ENCODE measurements at regions of chr19 and their contacts with region 1.

Region 1: DNA sequence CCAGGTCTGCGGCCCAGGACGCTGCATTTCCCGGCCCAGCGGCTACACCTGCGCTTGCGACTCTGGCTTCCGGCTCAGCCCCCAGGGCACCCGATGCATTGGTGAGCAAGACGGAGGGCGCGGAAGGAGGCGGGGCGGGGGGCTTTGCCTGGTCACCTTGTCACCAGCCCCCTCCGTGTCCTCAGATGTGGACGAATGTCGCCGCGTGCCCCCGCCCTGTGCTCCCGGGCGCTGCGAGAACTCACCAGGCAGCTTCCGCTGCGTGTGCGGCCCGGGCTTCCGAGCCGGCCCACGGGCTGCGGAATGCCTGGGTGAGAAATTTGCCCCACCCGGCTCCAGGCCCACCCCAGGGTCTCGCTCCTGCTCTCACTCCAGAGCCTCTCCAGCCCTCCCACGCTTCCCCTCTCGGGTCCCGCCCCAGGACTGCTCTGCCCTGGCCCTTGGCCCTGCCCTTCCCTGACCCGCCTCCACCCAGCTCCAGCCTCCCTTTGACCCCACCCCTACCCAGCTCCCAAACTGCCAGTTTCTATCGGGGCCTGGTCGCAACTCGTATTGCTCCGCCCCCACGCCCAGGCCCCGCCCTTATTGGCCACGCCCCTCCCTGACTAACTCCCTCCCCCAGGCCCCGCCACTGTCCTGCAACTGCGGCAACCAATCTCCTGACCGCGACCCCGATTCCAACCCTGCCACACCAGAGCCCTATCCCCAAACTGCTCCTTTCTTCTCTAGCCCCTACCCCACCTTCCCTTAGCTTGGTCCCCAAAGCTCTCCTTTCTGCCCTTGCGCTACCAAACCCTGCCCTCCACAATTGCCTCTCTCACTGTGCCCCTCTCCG is 8.6 kb downstream of the LTBP4 start:
- DNase-seq: peak; percentile 97
- H3K4me3 Mint-ChIP-seq: peak overlapping the region; percentile 72
- H3K27ac Mint-ChIP-seq: peak overlapping the region; percentile 84
- H3K4me1 Mint-ChIP-seq: peaks cover 61% of the 10 kb centered on the region
- H3K27me3 Mint-ChIP-seq: no peaks in the 10 kb centered on the region

Region 2: DNA sequence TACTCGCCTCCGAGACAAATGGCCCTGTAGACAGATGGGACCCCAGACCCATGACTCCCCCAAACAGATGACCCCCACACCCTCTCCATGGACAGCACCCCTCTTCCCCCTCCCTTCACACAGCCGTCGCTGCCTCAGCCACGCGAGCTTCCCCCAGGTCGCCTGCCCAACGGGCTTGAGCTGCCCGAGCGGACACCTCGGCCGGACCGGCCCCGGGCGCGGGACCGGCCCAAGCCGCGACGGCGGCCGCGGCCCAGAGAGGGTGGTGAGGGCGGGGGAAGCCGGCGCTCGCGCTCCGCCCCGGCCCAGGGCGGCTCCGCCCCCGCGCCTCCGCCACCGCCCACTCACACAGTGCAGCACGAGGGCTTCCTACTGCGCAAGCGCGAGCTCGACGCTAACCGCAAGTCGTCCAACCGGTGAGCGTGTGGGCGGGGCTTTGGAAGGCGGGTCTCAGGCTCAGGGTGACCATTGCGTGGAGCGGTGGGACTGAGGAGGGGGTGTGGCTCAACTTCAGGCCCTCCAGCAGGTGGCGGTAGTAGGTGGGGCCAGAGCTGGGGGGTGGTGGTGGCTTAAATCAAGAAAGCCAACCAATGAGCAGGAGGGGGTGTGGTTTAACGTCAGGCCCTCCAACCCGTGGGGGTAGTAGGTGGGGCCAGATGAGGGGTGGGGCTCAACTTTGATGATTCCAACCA is 39.3 kb before region 1 on chr19:
- CTCF ChIA-PET with region 1: interaction called, 5 read pairs
- POLR2A ChIA-PET with region 1: interaction called, 4 read pairs
- intact Hi-C with region 1: loop called (anchors 2 kb)
- DNase-seq: peak; percentile 98
- H3K4me3 Mint-ChIP-seq: peak overlapping the region; percentile 67
- H3K27ac Mint-ChIP-seq: peak overlapping the region; percentile 61
- H3K4me1 Mint-ChIP-seq: peaks cover 16% of the 10 kb centered on the region
- H3K27me3 Mint-ChIP-seq: peaks cover 17% of the 10 kb centered on the region

Region 3: DNA sequence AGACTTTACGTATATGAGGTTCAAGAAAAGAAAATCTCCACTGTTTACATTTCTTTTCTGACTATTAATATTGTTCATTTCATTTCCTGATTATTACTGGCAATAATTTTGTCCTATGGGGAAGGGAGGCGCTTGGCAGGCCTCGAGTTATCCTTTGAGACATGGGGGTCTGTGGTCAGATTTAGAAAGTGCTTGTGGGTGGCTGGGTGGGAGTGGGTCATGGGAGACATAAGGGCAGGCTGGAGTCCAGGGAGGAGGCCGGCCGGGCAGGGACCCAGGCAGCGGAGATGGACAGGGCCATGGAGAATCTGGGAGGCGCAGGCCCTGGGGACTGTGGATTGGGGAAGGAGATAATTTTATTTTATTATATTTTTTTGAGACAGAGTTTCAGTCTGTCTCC is 31.5 kb after region 1 on chr19:
- CTCF ChIA-PET with region 1: no interaction called
- POLR2A ChIA-PET with region 1: no interaction called
- intact Hi-C with region 1: no loop called
- DNase-seq: no peak
- H3K4me3 Mint-ChIP-seq: no peak overlapping the region
- H3K27ac Mint-ChIP-seq: no peak overlapping the region
- H3K4me1 Mint-ChIP-seq: no peaks in the 10 kb centered on the region
- H3K27me3 Mint-ChIP-seq: peaks cover 5% of the 10 kb centered on the region

Region 4: GRCh38 chr19:40798223-40798996 is 188.6 kb after region 1 on chr19:
- CTCF ChIA-PET with region 1: no interaction called
- POLR2A ChIA-PET with region 1: no interaction called
- intact Hi-C with region 1: loop called (anchors 5 kb)
- DNase-seq: peak; percentile 100
- H3K4me3 Mint-ChIP-seq: peak overlapping the region; percentile 91
- H3K27ac Mint-ChIP-seq: peak overlapping the region; percentile 93
- H3K4me1 Mint-ChIP-seq: peaks cover 49% of the 10 kb centered on the region
- H3K27me3 Mint-ChIP-seq: no peaks in the 10 kb centered on the region